ENCODE measurements at regions of chr3 and their contacts with region 1.

Region 1: GRCh38 chr3:55485211-55485791 is 1.8 kb downstream of the WNT5A start:
- DNase-seq: peak; percentile 86
- H3K4me3 ChIP-seq: peak overlapping the region; percentile 34 to 81 (median 57)
- H3K27ac ChIP-seq: peak overlapping the region in 7 of 8 donors; percentile 71 to 82 (median 78)
- H3K4me1 ChIP-seq: peaks cover 8 to 92% (median 38%) of the 10 kb centered on the region in 6 donors
- H3K27me3 ChIP-seq: peaks cover 3 to 100% (median 66%) of the 10 kb centered on the region in 7 donors
- CTCF ChIP-seq: peak in 9 of 11 experiments; percentile 27 to 84 (median 72)
- POLR2A ChIP-seq: no peak

Region 2: DNA sequence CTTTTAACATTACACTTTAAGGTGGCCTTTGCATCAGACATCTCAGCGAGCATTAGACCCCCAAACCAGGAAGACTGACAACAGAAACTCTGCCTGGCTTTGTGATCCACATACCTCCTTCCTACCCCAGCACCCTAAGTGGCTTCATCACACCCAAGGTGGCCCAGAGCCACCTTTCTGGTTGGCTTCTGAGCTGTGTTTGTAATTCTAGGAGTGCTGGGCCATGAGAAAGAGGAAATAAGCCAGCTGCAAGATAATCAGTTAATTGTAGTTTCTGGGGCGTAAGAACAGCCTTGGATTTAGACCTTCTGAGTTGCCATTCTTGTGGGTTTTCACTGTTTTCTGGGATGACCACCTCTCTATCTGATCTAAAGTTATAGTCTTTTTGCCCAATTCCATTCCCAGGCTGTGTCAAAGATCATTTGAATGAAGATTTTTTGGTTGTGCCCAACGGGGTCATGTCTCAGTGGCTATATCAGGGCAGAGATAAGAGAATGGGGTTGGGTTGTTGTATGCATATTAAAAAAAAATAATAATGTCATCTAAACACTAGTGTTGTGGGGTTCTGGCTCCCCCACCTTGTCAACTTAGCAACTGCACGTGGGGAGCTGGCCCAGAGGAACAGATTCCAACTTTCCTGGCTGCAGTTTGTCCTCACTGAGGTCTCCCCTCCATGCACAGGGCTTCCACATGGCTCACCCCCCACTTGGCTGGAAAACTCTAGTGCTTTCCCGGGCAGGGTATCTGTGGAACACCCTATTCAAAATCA is 236.6 kb after region 1 on chr3:
- intact Hi-C with region 1: loop called (anchors 10 kb)
- DNase-seq: no peak
- H3K4me3 ChIP-seq: no peak overlapping the region
- H3K27ac ChIP-seq: no peak overlapping the region
- H3K4me1 ChIP-seq: peaks cover 0 to 10% (median 2%) of the 10 kb centered on the region in 6 donors
- H3K27me3 ChIP-seq: peaks cover 0 to 15% (median 0%) of the 10 kb centered on the region in 7 donors
- CTCF ChIP-seq: peak in 6 of 11 experiments; percentile 18 to 47 (median 26)
- POLR2A ChIP-seq: no peak

Region 3: GRCh38 chr3:55780913-55781312 is 295.6 kb after region 1 on chr3:
- intact Hi-C with region 1: no loop called
- DNase-seq: no peak
- H3K4me3 ChIP-seq: no peak overlapping the region
- H3K27ac ChIP-seq: peak overlapping the region in 7 of 8 donors; percentile 55 to 75 (median 64)
- H3K4me1 ChIP-seq: peaks cover 0 to 5% (median 2%) of the 10 kb centered on the region in 6 donors
- H3K27me3 ChIP-seq: no peaks in the 10 kb centered on the region
- CTCF ChIP-seq: no peak
- POLR2A ChIP-seq: no peak

Region 4: GRCh38 chr3:55897573-55898224 is 412.4 kb after region 1 on chr3:
- intact Hi-C with region 1: loop called (anchors 5 kb)
- DNase-seq: no peak
- H3K4me3 ChIP-seq: no peak overlapping the region
- H3K27ac ChIP-seq: peak overlapping the region in 3 of 8 donors; percentile 22 to 37 (median 29)
- H3K4me1 ChIP-seq: peaks cover 0 to 7% (median 0%) of the 10 kb centered on the region in 6 donors
- H3K27me3 ChIP-seq: no peaks in the 10 kb centered on the region
- CTCF ChIP-seq: peak in 6 of 11 experiments; percentile 25 to 40 (median 31)
- POLR2A ChIP-seq: no peak

Region 5: DNA sequence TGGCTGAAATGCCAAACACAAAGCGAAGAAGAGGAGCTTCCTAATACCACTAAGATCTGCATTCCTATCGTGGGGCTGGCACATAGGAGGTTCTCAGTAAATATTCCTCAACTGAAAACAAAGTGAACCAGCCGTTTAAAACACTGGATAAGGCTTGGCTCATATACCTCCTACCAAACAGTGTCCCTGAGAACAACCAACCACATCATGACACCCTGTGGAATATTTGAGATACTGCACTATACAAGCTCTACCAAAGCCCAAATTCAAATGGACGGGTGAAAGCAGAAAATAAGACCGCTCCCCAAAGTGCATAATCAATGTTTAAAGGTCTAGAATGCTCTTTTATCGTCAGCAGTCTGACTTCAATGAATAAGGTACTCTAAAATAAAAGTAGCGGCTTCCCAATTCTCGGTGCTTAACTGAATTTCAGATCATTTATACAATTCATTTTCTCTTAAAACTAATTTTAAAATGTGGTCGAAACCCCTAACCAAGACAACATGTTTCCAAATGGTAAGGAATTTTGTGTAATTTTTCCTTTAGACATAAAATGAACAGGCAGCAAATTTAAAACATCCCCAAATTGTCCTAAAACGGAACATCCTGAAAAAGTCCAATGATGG is 557.1 kb after region 1 on chr3:
- intact Hi-C with region 1: loop called (anchors 5 kb)
- DNase-seq: no peak
- H3K4me3 ChIP-seq: no peak overlapping the region
- H3K27ac ChIP-seq: no peak overlapping the region
- H3K4me1 ChIP-seq: no peaks in the 10 kb centered on the region
- H3K27me3 ChIP-seq: peaks cover 0 to 9% (median 0%) of the 10 kb centered on the region in 7 donors
- CTCF ChIP-seq: peak in 10 of 11 experiments; percentile 16 to 64 (median 43)
- POLR2A ChIP-seq: no peak

Measured in spleen (tissue), 13 donors.